Right lobe of liver (tissue), 6 donors: ENCODE measurements at regions of chr1 and their contacts with region 1.

Region 1: GRCh38 chr1:40849801-40850592 is 12.2 kb downstream of the CITED4 start:
- DNase-seq: peak; percentile 72 to 78 (median 73)
- ATAC-seq: peak; percentile 84 to 90 (median 87)
- H3K4me3 ChIP-seq: no peak overlapping the region
- H3K27ac ChIP-seq: no peak overlapping the region
- H3K4me1 ChIP-seq: peaks cover 0 to 6% (median 3%) of the 10 kb centered on the region in 4 donors
- H3K27me3 ChIP-seq: no peaks in the 10 kb centered on the region
- CTCF ChIP-seq: peak; percentile 79 to 90 (median 88)
- POLR2A ChIP-seq: no peak

Region 2: DNA sequence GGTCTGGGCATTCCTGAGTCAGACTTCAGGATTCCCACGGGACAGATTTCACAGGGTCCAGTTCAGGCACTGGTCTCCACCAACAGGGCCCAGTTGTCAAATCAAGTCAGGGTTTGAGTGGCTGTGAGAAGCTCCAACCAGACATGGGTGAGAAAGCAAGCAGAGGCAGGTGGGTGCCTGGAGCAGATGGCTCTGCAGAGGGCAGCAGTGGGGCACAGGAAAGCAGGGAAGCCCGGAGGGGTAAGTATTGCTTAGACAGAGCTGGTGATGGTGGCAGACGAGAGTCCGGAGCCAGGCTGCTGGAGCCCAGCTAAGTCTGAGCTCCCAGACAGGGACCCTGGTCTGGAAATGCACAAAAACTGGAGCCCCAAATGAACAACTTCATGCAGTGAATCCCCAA is 224.9 kb before region 1 on chr1:
- intact Hi-C with region 1: loop called (anchors 10 kb)
- DNase-seq: peak in 2 of 3 donors; percentile 52 to 62
- ATAC-seq: peak; percentile 86 to 96 (median 92)
- H3K4me3 ChIP-seq: no peak overlapping the region
- H3K27ac ChIP-seq: no peak overlapping the region
- H3K4me1 ChIP-seq: peaks cover 0 to 5% (median 0%) of the 10 kb centered on the region in 4 donors
- H3K27me3 ChIP-seq: no peaks in the 10 kb centered on the region
- CTCF ChIP-seq: peak; percentile 40 to 55 (median 48)
- POLR2A ChIP-seq: no peak

Region 3: GRCh38 chr1:40630488-40631381 is 219.3 kb before region 1 on chr1:
- intact Hi-C with region 1: loop called (anchors 10 kb)
- DNase-seq: no peak
- ATAC-seq: peak; percentile 68 to 78 (median 70)
- H3K4me3 ChIP-seq: no peak overlapping the region
- H3K27ac ChIP-seq: no peak overlapping the region
- H3K4me1 ChIP-seq: no peaks in the 10 kb centered on the region
- H3K27me3 ChIP-seq: no peaks in the 10 kb centered on the region
- CTCF ChIP-seq: peak; percentile 17 to 40 (median 30)
- POLR2A ChIP-seq: no peak

Region 4: GRCh38 chr1:40684669-40685068 is 165.3 kb before region 1 on chr1:
- intact Hi-C with region 1: loop called in 1 of 2 experiments (anchors 10 kb)
- DNase-seq: no peak
- ATAC-seq: peak in 1 of 4 donors; percentile 18
- H3K4me3 ChIP-seq: no peak overlapping the region
- H3K27ac ChIP-seq: no peak overlapping the region
- H3K4me1 ChIP-seq: no peaks in the 10 kb centered on the region
- H3K27me3 ChIP-seq: no peaks in the 10 kb centered on the region
- CTCF ChIP-seq: no peak
- POLR2A ChIP-seq: no peak

Region 5: DNA sequence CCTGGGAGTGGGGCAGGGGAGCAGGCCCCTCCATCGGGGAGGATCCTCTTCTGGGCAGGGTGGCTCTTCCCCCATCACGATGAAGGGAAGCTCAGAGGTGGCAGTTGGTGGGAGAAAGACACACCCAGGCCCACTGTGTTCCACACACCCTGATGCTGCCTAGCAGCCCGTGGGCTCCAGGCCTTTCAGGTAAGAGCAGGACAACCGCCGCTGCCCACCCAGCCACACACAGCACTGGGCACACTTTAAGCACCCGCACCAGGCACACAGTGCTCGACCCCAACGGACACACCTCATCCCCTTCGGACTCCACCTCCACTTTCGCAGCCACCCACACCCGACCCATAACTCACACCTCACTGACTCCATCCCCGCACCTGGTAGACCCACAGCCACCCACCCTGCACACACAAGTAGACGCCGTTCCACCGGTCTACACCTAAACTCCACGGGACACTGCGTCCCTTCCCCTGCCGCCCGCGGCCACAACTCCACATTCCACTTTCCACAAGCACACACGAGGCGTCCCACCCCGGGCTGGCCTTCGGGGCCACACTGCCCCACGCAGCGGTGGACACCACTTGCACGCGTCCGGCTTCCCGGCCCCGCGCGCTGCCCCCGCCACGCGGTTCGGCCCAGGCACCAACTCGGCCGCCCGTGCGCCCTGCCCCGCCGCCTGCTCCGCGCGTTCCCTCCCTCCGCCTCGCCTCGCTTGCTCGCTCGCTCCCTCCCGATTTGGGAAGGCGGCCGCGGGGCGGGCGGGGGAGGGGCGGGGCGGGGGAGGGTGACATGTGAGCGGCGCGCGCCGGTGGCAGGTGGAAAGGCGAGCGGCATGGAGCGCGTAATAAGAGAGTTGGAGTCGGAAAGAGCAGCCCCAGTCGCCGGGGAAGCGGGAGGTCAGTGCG is 66.7 kb before region 1 on chr1 and contains the start of gene KCNQ4:
- intact Hi-C with region 1: no loop called
- DNase-seq: peak; percentile 49 to 61 (median 59)
- ATAC-seq: peak; percentile 60 to 75 (median 66)
- H3K4me3 ChIP-seq: peak within 1 kb of the TSS; percentile 20 to 46 (median 38)
- H3K27ac ChIP-seq: no peak within 1 kb of the TSS
- H3K4me1 ChIP-seq: peaks cover 0 to 4% (median 0%) of the 10 kb centered on the region in 4 donors
- H3K27me3 ChIP-seq: no peaks in the 10 kb centered on the region
- CTCF ChIP-seq: no peak
- POLR2A ChIP-seq: no peak
- total RNA-seq, gene KCNQ4: 0.12 to 0.23 (median 0.15) TPM

Region 6: GRCh38 chr1:40951943-40952743 is 102.1 kb after region 1 on chr1:
- intact Hi-C with region 1: loop called (anchors 5 kb)
- DNase-seq: peak; percentile 77 to 85 (median 84)
- ATAC-seq: peak; percentile 93 to 97 (median 95)
- H3K4me3 ChIP-seq: no peak overlapping the region
- H3K27ac ChIP-seq: no peak overlapping the region
- H3K4me1 ChIP-seq: peaks cover 0 to 8% (median 0%) of the 10 kb centered on the region in 4 donors
- H3K27me3 ChIP-seq: no peaks in the 10 kb centered on the region
- CTCF ChIP-seq: peak; percentile 86 to 93 (median 92)
- POLR2A ChIP-seq: no peak